ENCODE measurements at regions of chr12 and their contacts with region 1.

Region 1: DNA sequence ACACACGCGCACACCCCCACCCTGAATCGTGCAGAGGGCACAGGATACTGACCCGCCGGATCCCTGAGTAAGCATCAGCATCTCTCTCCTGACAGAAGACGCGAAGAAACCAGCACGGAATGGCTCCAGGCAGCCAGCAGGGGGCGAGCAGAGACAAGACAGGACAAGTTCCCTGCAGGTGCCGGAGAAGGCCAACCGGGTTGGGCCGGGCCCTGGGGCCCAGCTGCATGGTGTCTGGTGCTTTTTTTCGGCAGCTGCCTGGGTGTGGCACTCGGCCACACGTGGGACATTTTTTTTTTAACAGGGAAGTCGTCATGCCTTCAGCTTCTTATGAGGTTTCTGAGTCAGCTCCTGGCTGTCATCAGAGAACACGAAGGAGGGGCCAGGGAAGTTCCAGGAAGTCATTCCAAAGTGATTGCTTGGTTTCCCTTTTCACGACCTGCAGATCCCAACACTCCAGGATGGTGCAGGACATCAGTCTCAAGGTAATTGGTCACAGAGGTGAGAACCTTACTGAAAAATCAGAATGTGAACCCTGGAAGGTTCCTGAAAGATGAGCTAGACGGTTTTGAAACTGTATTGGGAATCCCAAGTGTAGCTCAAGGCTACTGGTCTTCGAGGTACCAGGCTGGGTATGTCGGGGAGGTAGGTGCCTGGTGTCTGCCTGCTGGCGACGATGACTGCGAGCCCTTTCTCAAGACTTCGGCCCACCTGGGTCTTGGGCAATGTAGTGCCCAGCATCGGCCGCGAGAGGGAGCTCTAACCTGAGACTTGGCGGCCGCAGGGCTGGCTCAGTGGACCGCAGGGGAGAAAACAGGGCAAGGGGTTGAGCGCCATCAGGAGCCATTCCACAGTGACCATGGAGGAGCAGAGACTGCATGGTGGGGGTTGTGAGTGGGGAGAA is 190.8 kb upstream of the PRMT8 start:
- DNase-seq: peak; percentile 79
- H3K4me3 ChIP-seq: no peak overlapping the region
- H3K27ac ChIP-seq: peak overlapping the region; percentile 48
- H3K4me1 ChIP-seq: peaks cover 22% of the 10 kb centered on the region
- H3K27me3 ChIP-seq: no peaks in the 10 kb centered on the region
- CTCF ChIP-seq: peak; percentile 96
- POLR2A ChIP-seq: no peak

Region 2: GRCh38 chr12:3275171-3276041 is 24.8 kb before region 1 on chr12:
- CTCF ChIA-PET with region 1: interaction called, 28 read pairs
- POLR2A ChIA-PET with region 1: no interaction called
- dilution Hi-C with region 1: no loop called
- intact Hi-C with region 1: no loop called
- DNase-seq: peak; percentile 48
- H3K4me3 ChIP-seq: no peak overlapping the region
- H3K27ac ChIP-seq: no peak overlapping the region
- H3K4me1 ChIP-seq: no peaks in the 10 kb centered on the region
- H3K27me3 ChIP-seq: no peaks in the 10 kb centered on the region
- CTCF ChIP-seq: peak; percentile 95 to 96
- POLR2A ChIP-seq: no peak

Region 3: GRCh38 chr12:3333583-3333982 is 33.4 kb after region 1 on chr12:
- CTCF ChIA-PET with region 1: interaction called, 29 read pairs
- POLR2A ChIA-PET with region 1: no interaction called
- dilution Hi-C with region 1: no loop called
- intact Hi-C with region 1: loop called (anchors 1 kb)
- DNase-seq: no peak
- H3K4me3 ChIP-seq: no peak overlapping the region
- H3K27ac ChIP-seq: no peak overlapping the region
- H3K4me1 ChIP-seq: no peaks in the 10 kb centered on the region
- H3K27me3 ChIP-seq: peaks cover 0 to 6% of the 10 kb centered on the region in 2 experiments
- CTCF ChIP-seq: no peak
- POLR2A ChIP-seq: no peak

Region 4: GRCh38 chr12:3752741-3753486 is 452.7 kb after region 1 on chr12 and contains the start of gene CRACR2A:
- CTCF ChIA-PET with region 1: interaction called, 17 read pairs
- POLR2A ChIA-PET with region 1: no interaction called
- dilution Hi-C with region 1: no loop called
- intact Hi-C with region 1: no loop called
- DNase-seq: peak; percentile 75
- H3K4me3 ChIP-seq: peak within 1 kb of the TSS; percentile 39 to 68 (median 53)
- H3K27ac ChIP-seq: peak within 1 kb of the TSS; percentile 50
- H3K4me1 ChIP-seq: peaks cover 16% of the 10 kb centered on the region
- H3K27me3 ChIP-seq: no peaks in the 10 kb centered on the region
- CTCF ChIP-seq: peak; percentile 68 to 72
- POLR2A ChIP-seq: no peak
- total RNA-seq, gene CRACR2A: 14.9 and 15.9 TPM in 2 replicates

Region 5: GRCh38 chr12:3797531-3798049 is 497.4 kb after region 1 on chr12:
- CTCF ChIA-PET with region 1: interaction called, 61 read pairs
- POLR2A ChIA-PET with region 1: no interaction called
- dilution Hi-C with region 1: no loop called
- intact Hi-C with region 1: no loop called
- DNase-seq: no peak
- H3K4me3 ChIP-seq: no peak overlapping the region
- H3K27ac ChIP-seq: no peak overlapping the region
- H3K4me1 ChIP-seq: no peaks in the 10 kb centered on the region
- H3K27me3 ChIP-seq: peaks cover 0 to 1% of the 10 kb centered on the region in 2 experiments
- CTCF ChIP-seq: no peak
- POLR2A ChIP-seq: no peak

Region 6: GRCh38 chr12:4082809-4083403 is 782.7 kb after region 1 on chr12:
- CTCF ChIA-PET with region 1: no interaction called
- POLR2A ChIA-PET with region 1: no interaction called
- dilution Hi-C with region 1: no loop called
- intact Hi-C with region 1: no loop called
- DNase-seq: no peak
- H3K4me3 ChIP-seq: no peak overlapping the region
- H3K27ac ChIP-seq: no peak overlapping the region
- H3K4me1 ChIP-seq: no peaks in the 10 kb centered on the region
- H3K27me3 ChIP-seq: no peaks in the 10 kb centered on the region
- CTCF ChIP-seq: no peak
- POLR2A ChIP-seq: no peak

Region 7: DNA sequence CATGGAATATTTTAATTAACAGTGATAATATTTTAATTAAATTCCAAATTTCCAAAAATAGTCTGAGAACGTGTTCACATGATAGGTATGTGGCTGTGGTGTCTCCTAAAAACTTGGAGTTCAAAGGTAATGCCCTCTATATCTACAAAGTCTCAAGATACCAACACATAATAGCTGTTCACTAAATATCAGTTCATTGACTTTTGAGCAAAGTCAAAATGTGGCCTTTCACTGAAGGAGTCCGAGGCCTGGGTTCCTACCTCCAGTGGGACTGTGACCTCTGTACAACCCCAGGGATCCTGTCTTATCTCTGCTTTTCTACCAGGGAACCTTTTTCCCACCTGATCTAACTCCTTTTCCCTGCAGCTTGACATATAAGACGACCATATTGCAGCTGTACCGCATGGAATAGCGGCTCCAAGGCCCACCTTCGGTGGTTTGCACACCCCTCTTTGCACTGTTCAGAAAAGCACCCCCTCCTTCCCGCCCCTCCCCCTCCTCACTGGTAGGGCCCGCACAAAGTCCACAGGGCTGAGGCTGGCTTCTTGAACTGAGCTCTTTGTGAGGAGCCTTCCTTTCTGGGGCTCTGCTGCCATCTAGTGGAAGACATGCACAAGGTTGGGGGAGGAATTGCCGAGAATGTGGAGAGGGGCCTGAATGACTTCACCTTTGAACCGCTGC is 976.5 kb after region 1 on chr12:
- CTCF ChIA-PET with region 1: interaction called, 39 read pairs
- POLR2A ChIA-PET with region 1: no interaction called
- dilution Hi-C with region 1: no loop called
- intact Hi-C with region 1: loop called (anchors 1 kb)
- DNase-seq: peak; percentile 87
- H3K4me3 ChIP-seq: no peak overlapping the region
- H3K27ac ChIP-seq: no peak overlapping the region
- H3K4me1 ChIP-seq: peaks cover 10% of the 10 kb centered on the region
- H3K27me3 ChIP-seq: peaks cover 49% of the 10 kb centered on the region in 2 experiments
- CTCF ChIP-seq: peak; percentile 80 to 85
- POLR2A ChIP-seq: no peak

Region 8: DNA sequence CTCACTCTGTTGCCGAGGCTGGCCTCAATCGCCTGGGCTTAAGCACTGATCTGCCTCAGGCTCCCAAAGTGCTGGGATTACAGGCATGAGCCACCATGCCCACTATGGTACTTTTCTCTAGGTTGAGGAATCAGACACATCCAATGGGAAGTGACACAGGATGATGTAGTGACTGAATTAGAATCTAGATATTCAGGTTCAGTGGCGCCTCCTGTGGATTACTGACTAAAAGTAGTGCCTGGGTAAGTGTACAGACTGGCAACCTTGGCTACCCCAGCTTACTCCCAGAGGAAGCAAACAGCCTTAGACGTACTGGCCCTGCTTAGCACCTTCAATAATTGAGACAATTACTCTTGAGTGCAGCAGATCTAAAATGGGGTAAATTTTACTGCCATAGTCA is 1442.9 kb after region 1 on chr12:
- CTCF ChIA-PET with region 1: no interaction called
- POLR2A ChIA-PET with region 1: no interaction called
- dilution Hi-C with region 1: no loop called
- intact Hi-C with region 1: no loop called
- DNase-seq: no peak
- H3K4me3 ChIP-seq: no peak overlapping the region
- H3K27ac ChIP-seq: no peak overlapping the region
- H3K4me1 ChIP-seq: no peaks in the 10 kb centered on the region
- H3K27me3 ChIP-seq: peaks cover 0 to 3% of the 10 kb centered on the region in 2 experiments
- CTCF ChIP-seq: no peak
- POLR2A ChIP-seq: no peak